Naive thymus-derived CD4-positive, alpha-beta T cell (primary cell): ENCODE measurements at regions of chr4 and their contacts with region 1.

Region 1: DNA sequence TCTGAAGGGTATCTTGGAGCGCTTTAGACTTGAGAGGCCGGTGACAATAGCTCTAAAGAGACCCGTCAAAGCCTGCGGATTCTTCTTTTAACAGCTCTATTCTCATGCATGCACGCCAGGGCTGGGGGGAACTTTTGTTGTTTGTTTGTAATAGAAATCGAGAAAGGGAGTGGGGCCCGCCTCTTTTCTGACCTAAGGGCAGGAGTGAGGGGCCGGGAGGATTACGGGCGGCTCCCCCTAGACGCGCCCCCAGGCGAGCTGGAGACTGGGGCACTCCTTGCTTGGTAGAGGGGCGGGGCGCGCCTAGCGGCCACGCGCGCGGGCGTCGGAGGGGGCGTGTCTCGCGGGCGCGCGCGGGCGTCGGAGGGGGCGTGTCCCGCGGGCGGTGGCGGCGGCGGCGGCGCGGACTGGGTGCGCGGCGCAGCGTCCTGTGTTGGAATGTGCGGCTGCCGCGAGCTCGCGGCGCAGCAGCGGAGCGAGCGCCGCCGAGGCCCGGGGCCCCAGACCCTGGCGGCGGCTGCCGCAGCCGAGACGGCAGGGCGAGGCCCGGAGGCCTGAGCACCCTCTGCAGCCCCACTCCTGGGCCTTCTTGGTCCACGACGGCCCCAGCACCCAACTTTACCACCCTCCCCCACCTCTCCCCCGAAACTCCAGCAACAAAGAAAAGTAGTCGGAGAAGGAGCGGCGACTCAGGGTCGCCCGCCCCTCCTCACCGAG is at the start of gene REST:
- DNase-seq: peak; percentile 80 to 95 (median 88)
- ATAC-seq: peak; percentile 89
- H3K4me3 ChIP-seq: peak within 1 kb of the TSS; percentile 92
- H3K4me3 Mint-ChIP-seq: peak within 1 kb of the TSS; percentile 90 to 98 (median 96)
- H3K27ac ChIP-seq: peak within 1 kb of the TSS; percentile 80
- H3K27ac Mint-ChIP-seq: peak within 1 kb of the TSS; percentile 85 to 99 (median 93)
- H3K4me1 ChIP-seq: peaks cover 26 to 33% of the 10 kb centered on the region in 2 donors
- H3K4me1 Mint-ChIP-seq: peaks cover 35 to 53% (median 44%) of the 10 kb centered on the region in 7 donors
- H3K27me3 ChIP-seq: no peaks in the 10 kb centered on the region
- H3K27me3 Mint-ChIP-seq: peaks cover 0 to 13% (median 0%) of the 10 kb centered on the region in 5 donors
- total RNA-seq, gene REST: 55.7 to 86.4 (median 72.8) TPM

Region 2: DNA sequence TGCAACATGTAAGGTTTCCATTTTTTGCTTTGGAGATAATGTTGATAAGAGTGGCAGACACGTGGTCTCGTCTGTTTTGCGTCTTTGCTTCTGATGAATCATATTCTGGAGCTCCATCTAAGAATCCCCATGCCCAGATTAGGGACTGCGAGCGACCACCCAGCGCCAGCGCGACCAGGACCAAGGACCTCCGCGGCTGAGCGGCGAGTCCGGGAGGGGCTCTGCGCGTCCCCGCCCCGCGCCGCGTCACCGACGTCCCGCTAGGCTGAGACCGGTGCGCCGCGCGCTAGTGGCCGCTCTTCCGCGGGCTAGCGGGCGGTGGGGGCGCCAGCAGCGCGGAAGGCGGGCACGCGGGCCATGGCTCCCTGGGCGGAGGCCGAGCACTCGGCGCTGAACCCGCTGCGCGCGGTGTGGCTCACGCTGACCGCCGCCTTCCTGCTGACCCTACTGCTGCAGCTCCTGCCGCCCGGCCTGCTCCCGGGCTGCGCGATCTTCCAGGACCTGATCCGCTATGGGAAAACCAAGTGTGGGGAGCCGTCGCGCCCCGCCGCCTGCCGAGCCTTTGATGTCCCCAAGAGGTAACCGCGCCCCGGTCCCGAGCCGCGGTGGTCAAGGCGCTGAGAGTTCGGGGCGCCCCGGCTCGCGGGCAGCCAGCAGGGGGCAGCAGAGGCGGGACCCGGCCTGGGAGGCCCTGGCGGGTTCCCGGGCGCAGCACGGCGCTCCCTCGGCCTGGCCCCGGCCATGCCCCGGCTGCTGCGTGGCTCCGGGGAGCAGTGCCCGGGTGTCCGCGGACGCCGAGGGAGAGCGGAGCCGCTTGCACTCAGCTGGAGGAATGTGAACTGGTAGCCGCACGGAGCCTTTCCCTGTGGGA is 1561.4 kb before region 1 on chr4 and contains the start of gene SRD5A3:
- CTCF ChIA-PET with region 1: no interaction called
- POLR2A ChIA-PET with region 1: no interaction called
- intact Hi-C with region 1: loop called in 1 of 2 experiments (anchors 5 kb)
- DNase-seq: peak; percentile 53 to 92 (median 72)
- ATAC-seq: peak; percentile 97
- H3K4me3 ChIP-seq: peak within 1 kb of the TSS; percentile 79
- H3K4me3 Mint-ChIP-seq: peak within 1 kb of the TSS; percentile 83 to 94 (median 90)
- H3K27ac ChIP-seq: peak within 1 kb of the TSS; percentile 69
- H3K27ac Mint-ChIP-seq: peak within 1 kb of the TSS; percentile 70 to 91 (median 87)
- H3K4me1 ChIP-seq: peaks cover 6 to 8% of the 10 kb centered on the region in 2 donors
- H3K4me1 Mint-ChIP-seq: peaks cover 8 to 23% (median 19%) of the 10 kb centered on the region in 7 donors
- H3K27me3 ChIP-seq: no peaks in the 10 kb centered on the region
- H3K27me3 Mint-ChIP-seq: no peaks in the 10 kb centered on the region
- total RNA-seq, gene SRD5A3: 1.9 to 8.5 (median 4.5) TPM

Region 3: DNA sequence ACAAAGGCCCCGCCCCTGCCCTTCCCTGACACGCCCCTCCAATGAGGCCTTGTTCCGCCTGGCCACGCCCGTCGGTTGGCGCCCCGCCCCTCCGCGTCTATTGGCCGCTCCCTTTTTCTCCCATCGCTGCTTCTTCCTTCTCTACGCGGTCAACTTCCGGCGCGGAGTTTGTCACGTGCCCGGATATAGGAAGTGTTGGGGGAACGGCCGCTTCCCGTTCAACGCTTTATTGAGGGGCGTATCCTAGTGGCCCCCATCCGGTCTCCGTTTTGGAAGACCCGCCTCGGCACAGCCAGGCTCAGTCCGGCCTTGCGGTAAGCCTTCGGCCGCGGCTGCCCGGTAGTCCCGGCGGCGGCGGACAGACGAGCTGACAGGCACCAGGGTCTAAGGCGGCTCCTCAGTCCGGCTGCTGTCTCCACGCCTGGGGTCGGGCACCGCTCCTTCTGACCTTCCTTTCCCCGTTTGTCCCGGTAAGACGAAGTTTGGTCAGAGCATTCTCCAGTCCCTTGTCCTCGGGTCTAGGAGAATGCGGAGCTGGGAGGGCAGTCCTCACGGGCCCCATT is 1054.1 kb before region 1 on chr4 and contains the start of gene EXOC1:
- CTCF ChIA-PET with region 1: no interaction called
- POLR2A ChIA-PET with region 1: interaction called, 3 read pairs
- intact Hi-C with region 1: loop called (anchors 1 kb)
- DNase-seq: peak; percentile 93 to 98 (median 94)
- ATAC-seq: peak; percentile 99
- H3K4me3 ChIP-seq: peak within 1 kb of the TSS; percentile 84
- H3K4me3 Mint-ChIP-seq: peak within 1 kb of the TSS in 2 of 10 donors; percentile 34 to 69
- H3K27ac ChIP-seq: peak within 1 kb of the TSS; percentile 87
- H3K27ac Mint-ChIP-seq: peak within 1 kb of the TSS in 7 of 9 donors; percentile 75 to 94 (median 90)
- H3K4me1 ChIP-seq: peaks cover 26 to 31% of the 10 kb centered on the region in 2 donors
- H3K4me1 Mint-ChIP-seq: peaks cover 22 to 48% (median 42%) of the 10 kb centered on the region in 7 donors
- H3K27me3 ChIP-seq: no peaks in the 10 kb centered on the region
- H3K27me3 Mint-ChIP-seq: no peaks in the 10 kb centered on the region
- total RNA-seq, gene EXOC1: 20.3 to 46.7 (median 32.1) TPM

Region 4: GRCh38 chr4:56467284-56468096 is 440.2 kb before region 1 on chr4 and contains the start of gene SRP72:
- CTCF ChIA-PET with region 1: no interaction called
- POLR2A ChIA-PET with region 1: no interaction called
- intact Hi-C with region 1: loop called (anchors 2 kb)
- DNase-seq: peak; percentile 80 to 95 (median 88)
- ATAC-seq: peak; percentile 98
- H3K4me3 ChIP-seq: peak within 1 kb of the TSS; percentile 98
- H3K4me3 Mint-ChIP-seq: peak within 1 kb of the TSS; percentile 93 to 100 (median 96)
- H3K27ac ChIP-seq: peak within 1 kb of the TSS; percentile 90
- H3K27ac Mint-ChIP-seq: peak within 1 kb of the TSS; percentile 94 to 99 (median 96)
- H3K4me1 ChIP-seq: peaks cover 25 to 29% of the 10 kb centered on the region in 2 donors
- H3K4me1 Mint-ChIP-seq: peaks cover 46 to 68% (median 62%) of the 10 kb centered on the region in 7 donors
- H3K27me3 ChIP-seq: no peaks in the 10 kb centered on the region
- H3K27me3 Mint-ChIP-seq: no peaks in the 10 kb centered on the region
- total RNA-seq, gene SRP72: 98.4 to 145 (median 109) TPM

Region 5: GRCh38 chr4:56757821-56758411 is 149.7 kb before region 1 on chr4:
- CTCF ChIA-PET with region 1: no interaction called
- POLR2A ChIA-PET with region 1: no interaction called
- intact Hi-C with region 1: loop called in 1 of 2 experiments (anchors 5 kb)
- DNase-seq: peak; percentile 12 to 85 (median 68)
- ATAC-seq: peak; percentile 88
- H3K4me3 ChIP-seq: peak overlapping the region; percentile 46
- H3K4me3 Mint-ChIP-seq: peak overlapping the region; percentile 71 to 91 (median 85)
- H3K27ac ChIP-seq: peak overlapping the region; percentile 65
- H3K27ac Mint-ChIP-seq: peak overlapping the region; percentile 76 to 99 (median 92)
- H3K4me1 ChIP-seq: peaks cover 28 to 29% of the 10 kb centered on the region in 2 donors
- H3K4me1 Mint-ChIP-seq: peaks cover 39 to 76% (median 57%) of the 10 kb centered on the region in 7 donors
- H3K27me3 ChIP-seq: no peaks in the 10 kb centered on the region
- H3K27me3 Mint-ChIP-seq: peaks cover 0 to 14% (median 0%) of the 10 kb centered on the region in 5 donors

Region 6: DNA sequence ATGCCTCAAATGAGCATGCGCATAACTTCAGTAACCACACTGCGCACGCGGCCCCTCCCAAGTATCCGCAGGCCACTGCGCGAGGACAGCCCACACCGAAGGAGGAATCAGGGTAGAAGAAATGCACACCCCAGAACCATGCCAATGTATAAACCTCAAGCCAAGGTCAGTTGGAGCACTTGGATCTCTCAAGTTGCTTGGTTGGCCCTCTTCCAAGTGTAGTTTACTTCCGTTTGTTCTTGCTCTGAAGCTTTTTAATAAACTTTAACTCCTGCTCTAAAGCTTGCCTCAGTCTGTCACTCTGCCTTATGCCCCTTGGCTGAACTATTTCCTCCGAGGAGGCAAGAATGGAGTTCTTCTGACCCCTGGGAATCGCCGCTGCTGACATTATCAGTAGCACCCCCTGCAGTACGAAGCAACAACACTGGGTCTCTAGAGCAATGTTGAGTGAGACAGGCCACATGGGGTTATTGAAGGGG is 64.2 kb before region 1 on chr4:
- CTCF ChIA-PET with region 1: no interaction called
- POLR2A ChIA-PET with region 1: no interaction called
- intact Hi-C with region 1: loop called in 1 of 2 experiments (anchors 5 kb)
- DNase-seq: no peak
- ATAC-seq: no peak
- H3K4me3 ChIP-seq: no peak overlapping the region
- H3K4me3 Mint-ChIP-seq: no peak overlapping the region
- H3K27ac ChIP-seq: no peak overlapping the region
- H3K27ac Mint-ChIP-seq: no peak overlapping the region
- H3K4me1 ChIP-seq: no peaks in the 10 kb centered on the region
- H3K4me1 Mint-ChIP-seq: no peaks in the 10 kb centered on the region
- H3K27me3 ChIP-seq: no peaks in the 10 kb centered on the region
- H3K27me3 Mint-ChIP-seq: no peaks in the 10 kb centered on the region

Region 7: GRCh38 chr4:56892691-56893090 is 15.0 kb before region 1 on chr4:
- CTCF ChIA-PET with region 1: no interaction called
- POLR2A ChIA-PET with region 1: no interaction called
- intact Hi-C with region 1: no loop called
- DNase-seq: no peak
- ATAC-seq: no peak
- H3K4me3 ChIP-seq: no peak overlapping the region
- H3K4me3 Mint-ChIP-seq: no peak overlapping the region
- H3K27ac ChIP-seq: no peak overlapping the region
- H3K27ac Mint-ChIP-seq: no peak overlapping the region
- H3K4me1 ChIP-seq: no peaks in the 10 kb centered on the region
- H3K4me1 Mint-ChIP-seq: no peaks in the 10 kb centered on the region
- H3K27me3 ChIP-seq: no peaks in the 10 kb centered on the region
- H3K27me3 Mint-ChIP-seq: peaks cover 0 to 16% (median 0%) of the 10 kb centered on the region in 5 donors

Region 8: GRCh38 chr4:56977321-56978012 is 69.8 kb after region 1 on chr4 and contains the start of gene NOA1:
- CTCF ChIA-PET with region 1: interaction called, 12 read pairs
- POLR2A ChIA-PET with region 1: interaction called, 142 read pairs
- intact Hi-C with region 1: loop called (anchors 1 kb)
- DNase-seq: peak; percentile 98 to 99 (median 99)
- ATAC-seq: peak; percentile 86
- H3K4me3 ChIP-seq: peak within 1 kb of the TSS; percentile 80
- H3K4me3 Mint-ChIP-seq: peak within 1 kb of the TSS; percentile 92 to 100 (median 98)
- H3K27ac ChIP-seq: peak within 1 kb of the TSS; percentile 82
- H3K27ac Mint-ChIP-seq: peak within 1 kb of the TSS; percentile 94 to 100 (median 98)
- H3K4me1 ChIP-seq: peaks cover 36 to 38% of the 10 kb centered on the region in 2 donors
- H3K4me1 Mint-ChIP-seq: peaks cover 41 to 70% (median 52%) of the 10 kb centered on the region in 7 donors
- H3K27me3 ChIP-seq: no peaks in the 10 kb centered on the region
- H3K27me3 Mint-ChIP-seq: peaks cover 0 to 2% (median 0%) of the 10 kb centered on the region in 5 donors
- total RNA-seq, gene NOA1: 13.6 to 23.0 (median 20.9) TPM